Naive thymus-derived CD4-positive, alpha-beta T cell (primary cell): ENCODE measurements at regions of chr3 and their contacts with region 1.

Region 1: DNA sequence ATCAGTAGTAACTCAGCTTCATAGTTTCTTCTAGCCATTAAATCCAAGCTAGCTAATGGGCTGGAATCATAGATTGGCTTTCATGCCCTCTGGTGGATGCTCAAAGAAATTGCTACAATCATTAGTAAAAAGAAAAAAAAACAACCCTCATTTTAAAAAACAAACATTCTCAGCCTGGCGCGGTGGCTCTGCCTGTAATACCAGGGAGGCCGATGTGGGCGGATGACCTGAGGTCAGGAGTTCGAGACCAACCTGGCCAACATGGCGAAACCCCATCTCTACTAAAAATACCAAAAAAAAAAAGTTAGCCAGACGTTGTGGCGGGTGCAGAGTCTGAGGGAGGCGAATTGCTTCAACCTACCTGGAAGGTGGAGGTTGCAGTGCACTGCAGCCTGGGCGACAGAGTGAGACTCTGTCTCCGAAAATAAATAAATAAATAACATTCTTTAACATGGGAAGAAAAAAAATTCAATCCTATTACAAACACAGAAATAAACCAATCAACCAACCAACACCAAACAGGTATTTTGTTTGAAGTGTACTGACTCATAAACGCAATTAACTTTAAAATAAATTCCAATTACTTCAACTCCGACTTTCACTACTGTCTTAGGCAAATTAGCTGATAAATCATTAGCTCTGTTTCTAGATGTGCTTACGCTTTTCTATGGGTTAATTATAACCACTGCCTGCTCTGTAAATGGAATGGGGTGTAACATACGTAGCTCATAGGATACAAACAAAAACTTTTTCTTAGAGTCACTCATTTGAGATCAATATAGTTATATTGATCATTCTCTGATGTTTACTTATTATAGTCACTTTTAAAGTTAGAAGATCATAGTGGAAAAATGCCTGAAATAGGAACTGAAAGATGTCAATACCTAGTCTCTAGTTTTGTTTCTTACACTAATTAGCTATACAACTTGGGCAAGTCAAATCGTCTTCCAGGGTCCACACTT is 24.9 kb downstream of the TMEM207 start:
- DNase-seq: peak in 7 of 9 donors; percentile 2 to 47 (median 23)
- ATAC-seq: peak; percentile 56
- H3K4me3 ChIP-seq: no peak overlapping the region
- H3K4me3 Mint-ChIP-seq: peak overlapping the region in 8 of 10 donors; percentile 15 to 72 (median 31)
- H3K27ac ChIP-seq: no peak overlapping the region
- H3K27ac Mint-ChIP-seq: peak overlapping the region in 5 of 9 donors; percentile 3 to 59 (median 28)
- H3K4me1 ChIP-seq: no peaks in the 10 kb centered on the region
- H3K4me1 Mint-ChIP-seq: peaks cover 0 to 8% (median 3%) of the 10 kb centered on the region in 7 donors
- H3K27me3 ChIP-seq: no peaks in the 10 kb centered on the region
- H3K27me3 Mint-ChIP-seq: peaks cover 0 to 7% (median 0%) of the 10 kb centered on the region in 5 donors

Region 2: DNA sequence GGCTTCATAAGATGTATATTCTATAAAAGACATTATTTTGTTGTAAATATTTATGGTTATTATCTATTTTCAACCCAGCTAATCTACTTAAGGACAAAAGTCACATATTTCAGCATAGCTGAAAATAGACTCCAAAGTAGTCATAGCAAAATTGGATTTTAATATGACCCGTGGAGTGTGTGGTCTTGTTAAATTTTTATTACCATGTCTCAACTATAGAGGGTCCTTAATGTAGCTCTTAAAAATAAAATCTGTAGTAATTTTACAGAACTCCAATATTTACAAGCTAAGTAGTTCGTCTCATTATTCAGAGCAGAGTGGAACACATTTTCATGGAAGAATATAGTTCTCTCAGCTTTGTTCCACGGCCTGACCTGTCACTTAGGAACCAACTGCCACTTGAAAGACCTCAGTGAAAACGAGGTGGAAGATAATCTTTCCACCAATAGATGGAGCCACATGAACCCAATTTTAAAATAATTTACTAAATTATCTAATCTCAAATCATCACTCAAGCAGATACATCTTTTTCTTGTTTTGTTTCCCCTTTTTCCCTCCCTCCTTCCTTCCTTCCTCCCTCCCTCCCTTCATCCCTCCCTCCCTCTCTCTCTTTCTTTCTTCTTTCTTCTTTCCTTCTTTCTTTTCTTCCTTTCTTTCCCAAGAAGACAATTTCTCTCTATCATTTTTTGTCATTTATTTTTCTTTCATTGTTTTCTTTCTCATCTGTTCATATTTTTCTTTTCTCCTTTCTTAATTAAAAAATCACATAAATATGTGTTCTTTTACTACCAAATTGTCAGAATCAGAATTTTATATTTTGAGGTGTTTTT is 199.7 kb before region 1 on chr3:
- CTCF ChIA-PET with region 1: no interaction called
- POLR2A ChIA-PET with region 1: no interaction called
- intact Hi-C with region 1: loop called (anchors 1 to 10 kb)
- DNase-seq: peak in 6 of 9 donors; percentile 5 to 40 (median 26)
- ATAC-seq: no peak
- H3K4me3 ChIP-seq: no peak overlapping the region
- H3K4me3 Mint-ChIP-seq: no peak overlapping the region
- H3K27ac ChIP-seq: no peak overlapping the region
- H3K27ac Mint-ChIP-seq: no peak overlapping the region
- H3K4me1 ChIP-seq: no peaks in the 10 kb centered on the region
- H3K4me1 Mint-ChIP-seq: no peaks in the 10 kb centered on the region
- H3K27me3 ChIP-seq: no peaks in the 10 kb centered on the region
- H3K27me3 Mint-ChIP-seq: peaks cover 0 to 6% (median 5%) of the 10 kb centered on the region in 5 donors

Region 3: GRCh38 chr3:190435618-190436017 is 10.9 kb after region 1 on chr3:
- CTCF ChIA-PET with region 1: no interaction called
- POLR2A ChIA-PET with region 1: no interaction called
- intact Hi-C with region 1: no loop called
- DNase-seq: no peak
- ATAC-seq: no peak
- H3K4me3 ChIP-seq: no peak overlapping the region
- H3K4me3 Mint-ChIP-seq: no peak overlapping the region
- H3K27ac ChIP-seq: no peak overlapping the region
- H3K27ac Mint-ChIP-seq: no peak overlapping the region
- H3K4me1 ChIP-seq: no peaks in the 10 kb centered on the region
- H3K4me1 Mint-ChIP-seq: peaks cover 0 to 2% (median 0%) of the 10 kb centered on the region in 7 donors
- H3K27me3 ChIP-seq: peaks cover 3 to 4% of the 10 kb centered on the region in 2 donors
- H3K27me3 Mint-ChIP-seq: peaks cover 21 to 46% (median 36%) of the 10 kb centered on the region in 5 donors